ENCODE measurements at regions of chr7 and their contacts with region 1.

Region 1: DNA sequence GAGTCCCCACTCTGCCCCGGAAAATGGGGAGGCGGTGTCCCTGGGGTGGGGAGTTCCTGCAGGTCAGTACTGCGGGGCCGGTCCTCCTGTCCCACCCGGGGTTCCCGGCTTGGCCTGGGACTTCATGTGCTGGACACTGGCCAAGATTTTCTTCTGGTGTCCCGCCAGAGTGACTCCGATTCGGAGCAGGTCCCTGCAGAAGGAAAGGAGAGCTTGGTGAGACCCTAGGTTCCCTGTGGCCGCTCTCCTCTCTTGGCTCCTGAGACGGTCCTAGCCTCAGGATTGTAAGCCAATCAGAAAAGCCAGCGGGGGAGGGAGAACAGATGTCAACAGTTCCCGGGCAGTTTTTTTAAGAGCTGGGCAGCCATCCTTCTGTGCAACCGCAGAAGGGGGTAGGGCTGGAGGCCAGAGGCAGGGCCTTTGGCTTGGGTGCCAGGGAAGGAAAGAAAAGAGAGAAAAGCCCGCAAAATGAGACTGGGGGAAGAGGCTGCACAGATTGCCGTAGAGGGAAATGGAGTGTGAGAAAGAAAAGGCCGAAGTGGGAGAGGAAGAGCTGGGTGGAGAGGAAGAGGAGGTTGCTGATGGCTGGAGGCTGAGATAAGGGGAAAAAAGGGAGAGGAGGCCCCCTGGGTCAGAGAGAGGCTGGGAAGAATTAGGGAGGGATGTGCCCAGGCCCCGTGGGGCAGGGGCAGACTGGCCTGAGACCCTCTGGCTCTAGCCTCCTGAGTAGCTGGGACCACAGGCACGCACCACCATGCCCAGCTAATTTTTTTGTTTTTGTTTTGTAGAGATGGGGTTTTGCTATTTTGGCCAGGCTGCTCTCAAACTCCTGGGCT is 23.7 kb downstream of the EPHB4 start:
- DNase-seq: peak; percentile 92
- H3K4me3 ChIP-seq: peak overlapping the region in 1 of 4 donors; percentile 6
- H3K27ac ChIP-seq: peak overlapping the region; percentile 72 to 84 (median 79)
- H3K4me1 ChIP-seq: peaks cover 0 to 39% (median 36%) of the 10 kb centered on the region in 4 donors
- H3K27me3 ChIP-seq: no peaks in the 10 kb centered on the region
- CTCF ChIP-seq: no peak
- EP300 ChIP-seq: no peak
- POLR2A ChIP-seq: no peak

Region 2: DNA sequence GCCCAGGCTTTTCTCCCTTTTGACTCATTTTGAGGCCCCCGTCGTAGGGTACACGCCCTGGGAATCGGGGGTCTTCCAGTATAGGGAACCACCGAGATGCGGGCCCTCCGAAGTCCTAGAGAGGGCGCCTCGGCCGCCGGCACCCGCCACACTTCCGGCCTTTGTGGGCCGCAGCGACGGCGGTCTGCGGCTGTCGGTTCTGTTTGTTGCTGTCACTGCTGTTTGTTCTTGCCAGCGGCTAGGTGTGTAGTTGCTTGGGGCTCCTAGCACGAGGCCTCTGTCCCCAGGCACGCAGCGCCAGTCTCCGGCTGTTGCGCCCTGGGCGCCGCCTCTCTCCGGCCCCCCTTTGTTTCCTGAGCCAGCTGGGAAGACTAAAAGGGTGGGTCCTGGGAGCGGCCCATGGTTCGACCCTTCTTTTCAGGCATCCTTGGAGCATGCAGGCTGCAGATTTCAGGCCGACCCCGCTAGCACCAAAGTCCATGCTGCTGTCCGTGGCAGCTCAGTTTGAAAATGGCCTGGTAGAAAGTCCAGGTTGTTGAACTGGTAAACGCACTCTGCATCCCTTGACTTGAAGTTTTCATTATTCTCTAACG is 806.0 kb before region 1 on chr7:
- intact Hi-C with region 1: no loop called
- DNase-seq: peak; percentile 78
- H3K4me3 ChIP-seq: peak overlapping the region; percentile 43 to 56 (median 50)
- H3K27ac ChIP-seq: peak overlapping the region; percentile 63 to 80 (median 72)
- H3K4me1 ChIP-seq: peaks cover 0 to 20% (median 6%) of the 10 kb centered on the region in 4 donors
- H3K27me3 ChIP-seq: no peaks in the 10 kb centered on the region
- CTCF ChIP-seq: peak in 3 of 4 experiments; percentile 32 to 53 (median 47)
- EP300 ChIP-seq: no peak
- POLR2A ChIP-seq: peak; percentile 36 to 37

Region 3: DNA sequence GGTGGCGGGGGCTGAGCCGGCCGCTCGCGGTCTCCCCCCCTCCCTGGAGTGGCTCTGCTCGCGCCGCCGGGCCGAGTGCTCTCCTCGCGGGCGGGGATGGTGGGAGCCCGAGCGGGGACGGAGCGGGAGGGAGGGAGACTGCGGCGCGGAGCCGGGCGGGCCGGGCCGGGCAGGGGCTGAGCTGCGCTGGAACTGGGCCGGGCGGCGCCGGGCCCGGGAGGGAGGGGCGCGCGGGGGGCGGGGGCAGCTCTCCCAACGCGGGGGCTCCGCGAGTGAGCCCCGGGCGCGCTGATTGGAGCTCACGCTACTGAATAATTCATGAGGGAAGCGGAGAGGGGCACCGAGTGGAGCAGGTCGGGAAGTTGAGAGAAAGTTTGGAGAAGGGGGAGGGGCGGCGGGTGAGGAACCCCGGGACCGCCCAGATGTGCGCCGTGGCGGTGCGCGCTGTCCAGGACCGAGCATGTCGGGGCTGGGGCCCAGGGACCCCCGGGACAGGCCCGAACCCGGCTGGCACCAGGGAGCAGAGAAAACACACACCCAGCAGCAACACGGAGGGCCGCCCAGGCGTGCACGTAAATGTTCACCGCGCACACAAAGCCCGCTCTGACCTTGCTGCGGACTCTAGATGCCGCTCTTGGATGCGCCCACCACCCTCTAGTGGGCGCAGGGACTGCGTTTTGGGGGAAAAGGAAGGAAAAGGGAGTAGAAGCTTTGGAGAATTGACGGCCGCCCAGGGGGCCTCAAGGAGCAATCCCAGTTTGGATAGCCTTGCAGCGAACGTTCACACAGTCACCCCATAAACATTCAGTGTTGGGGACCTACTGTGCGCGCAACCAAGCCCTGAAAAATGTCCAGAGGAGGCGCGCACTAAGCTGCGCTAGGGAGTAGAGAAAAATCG is 24.0 kb after region 1 on chr7 and contains the start of gene EPHB4:
- intact Hi-C with region 1: loop called (anchors 2 kb)
- DNase-seq: peak; percentile 94
- H3K4me3 ChIP-seq: peak within 1 kb of the TSS; percentile 74 to 84 (median 80)
- H3K27ac ChIP-seq: peak within 1 kb of the TSS; percentile 85 to 92 (median 88)
- H3K4me1 ChIP-seq: peaks cover 0 to 34% (median 33%) of the 10 kb centered on the region in 4 donors
- H3K27me3 ChIP-seq: no peaks in the 10 kb centered on the region
- CTCF ChIP-seq: no peak
- EP300 ChIP-seq: no peak
- POLR2A ChIP-seq: peak in 1 of 2 donors; percentile 20
- total RNA-seq, gene EPHB4: 23.9 to 35.5 (median 29.3) TPM

Region 4: DNA sequence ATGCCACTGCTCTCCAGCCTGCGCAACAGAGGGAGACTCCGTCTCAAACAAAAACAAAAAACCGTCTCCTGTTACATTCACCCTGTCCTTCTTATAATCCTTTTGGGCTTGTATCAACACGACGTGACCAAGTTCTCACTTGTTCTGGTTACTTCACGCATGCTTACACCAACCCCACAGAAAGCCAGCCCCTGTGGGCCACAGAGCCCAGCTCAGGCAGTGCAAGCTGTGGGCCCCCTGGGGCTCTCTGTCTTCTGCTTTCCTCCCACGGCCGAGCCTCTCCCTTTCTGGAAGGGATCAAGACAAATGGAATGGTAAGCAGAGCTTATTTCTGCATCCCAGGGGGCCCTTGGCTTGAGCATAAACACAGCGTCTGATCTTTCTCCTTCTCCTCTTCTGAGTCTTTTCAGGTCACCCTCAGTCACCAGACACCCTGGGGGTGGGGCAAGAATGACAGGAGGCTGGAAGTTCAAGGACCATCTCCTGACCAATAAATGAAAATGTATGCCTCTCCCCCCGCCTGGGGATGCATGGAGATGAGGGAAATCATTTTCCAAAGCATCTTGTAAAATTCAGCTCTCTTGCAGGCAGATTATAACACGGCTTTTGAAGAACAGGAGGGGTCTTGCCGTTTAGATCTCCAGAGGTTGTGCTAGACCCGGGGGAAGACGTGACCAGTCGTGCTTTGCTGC is 262.7 kb after region 1 on chr7:
- intact Hi-C with region 1: loop called (anchors 10 kb)
- DNase-seq: no peak
- H3K4me3 ChIP-seq: no peak overlapping the region
- H3K27ac ChIP-seq: no peak overlapping the region
- H3K4me1 ChIP-seq: no peaks in the 10 kb centered on the region
- H3K27me3 ChIP-seq: peaks cover 0 to 48% (median 6%) of the 10 kb centered on the region in 3 donors
- CTCF ChIP-seq: no peak
- EP300 ChIP-seq: no peak
- POLR2A ChIP-seq: no peak

Region 5: DNA sequence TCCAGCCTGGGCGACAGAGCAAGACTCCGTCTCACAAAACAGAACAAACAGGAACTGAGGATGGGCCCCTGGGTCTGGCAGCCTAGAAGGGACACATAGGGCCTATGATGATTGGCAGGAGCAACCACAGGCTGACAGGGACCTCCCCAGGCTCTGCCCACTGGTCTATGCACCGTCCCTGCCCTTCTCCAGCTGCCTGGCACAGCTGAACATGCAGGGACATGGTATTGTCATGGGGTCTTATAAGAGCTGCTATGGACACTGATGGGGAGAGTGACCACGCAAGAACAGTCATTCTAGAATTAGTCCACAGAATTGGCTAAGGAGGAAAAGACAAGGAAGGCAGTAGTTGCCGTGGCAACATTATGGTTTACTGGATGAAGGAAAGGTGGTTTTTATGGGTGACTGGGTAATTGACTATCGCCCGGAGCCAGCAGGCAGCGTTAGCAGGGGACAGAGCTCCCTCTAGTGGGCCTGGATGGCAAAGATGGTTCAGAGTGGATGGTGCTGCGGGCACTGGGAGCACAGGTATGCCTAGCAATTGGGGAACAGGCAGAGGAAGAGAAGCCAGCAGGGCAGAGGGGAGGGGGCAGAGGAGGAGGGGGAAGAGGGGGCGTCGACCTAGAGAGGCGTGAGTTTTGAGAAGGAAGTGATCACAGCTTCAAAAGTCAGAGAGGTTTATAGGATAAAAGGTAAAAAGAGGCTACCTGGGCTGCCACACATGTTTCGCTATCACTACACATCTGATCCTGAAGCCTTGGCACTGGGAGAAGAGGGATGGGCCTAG is 273.9 kb after region 1 on chr7:
- intact Hi-C with region 1: loop called (anchors 5 kb)
- DNase-seq: peak; percentile 77
- H3K4me3 ChIP-seq: no peak overlapping the region
- H3K27ac ChIP-seq: no peak overlapping the region
- H3K4me1 ChIP-seq: no peaks in the 10 kb centered on the region
- H3K27me3 ChIP-seq: no peaks in the 10 kb centered on the region
- CTCF ChIP-seq: peak; percentile 48 to 83 (median 72)
- EP300 ChIP-seq: no peak
- POLR2A ChIP-seq: no peak